Heart left ventricle (tissue), 16 donors: ENCODE measurements at regions of chr1 and their contacts with region 1.

Region 1: DNA sequence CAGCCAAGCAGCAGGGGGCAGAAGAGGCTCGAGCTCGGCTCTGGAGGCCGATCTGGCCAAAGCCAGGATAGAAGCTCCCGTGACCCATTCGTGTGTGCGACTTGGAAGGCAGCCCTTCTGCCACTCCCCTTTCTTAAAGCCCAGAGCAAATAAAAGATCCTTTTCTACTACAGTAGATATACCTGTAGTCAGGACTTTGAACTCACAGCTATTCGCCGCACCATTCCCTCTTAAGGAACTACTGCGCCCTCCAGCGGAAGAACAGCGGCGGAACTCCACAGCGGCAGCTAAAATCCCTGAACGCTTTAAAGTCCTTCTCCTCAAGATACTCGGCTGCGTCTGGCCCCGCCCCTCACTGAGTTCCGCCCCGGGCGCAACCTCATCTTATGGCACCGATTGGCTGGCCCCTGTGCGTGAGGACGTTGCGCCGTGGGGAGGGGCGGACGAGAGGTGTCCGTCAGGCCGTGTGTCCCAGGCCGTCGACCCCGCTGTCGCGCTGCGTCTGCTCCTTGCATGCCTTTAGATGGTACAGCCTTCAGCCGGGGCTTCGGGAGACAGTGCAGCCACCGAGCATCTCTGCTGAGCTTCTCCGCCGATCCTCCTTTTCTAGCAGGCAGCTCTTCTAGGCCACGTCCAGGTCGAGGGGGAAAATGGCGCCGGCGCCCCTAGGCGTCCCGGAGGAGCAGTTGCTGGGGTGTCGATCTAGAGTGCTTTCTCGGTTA is at the start of gene LRIG2:
- DNase-seq: peak; percentile 98 to 99 (median 98)
- ATAC-seq: peak; percentile 99 to 100 (median 100)
- H3K4me3 ChIP-seq: peak within 1 kb of the TSS; percentile 66 to 89 (median 78)
- H3K27ac ChIP-seq: peak within 1 kb of the TSS; percentile 87 to 96 (median 92)
- H3K4me1 ChIP-seq: peaks cover 4 to 40% (median 26%) of the 10 kb centered on the region in 12 donors
- H3K27me3 ChIP-seq: no peaks in the 10 kb centered on the region
- CTCF ChIP-seq: peak; percentile 82 to 96 (median 86)
- POLR2A ChIP-seq: peak; percentile 71 to 85
- total RNA-seq, gene LRIG2: 5.9 to 13.1 (median 8.6) TPM

Region 2: GRCh38 chr1:113677250-113678158 is 604.6 kb after region 1 on chr1:
- intact Hi-C with region 1: loop called in 1 of 10 experiments (anchors 5 kb)
- DNase-seq: peak in 3 of 5 donors; percentile 16 to 39 (median 22)
- ATAC-seq: peak in 3 of 4 donors; percentile 42 to 75 (median 74)
- H3K4me3 ChIP-seq: no peak overlapping the region
- H3K27ac ChIP-seq: no peak overlapping the region
- H3K4me1 ChIP-seq: peaks cover 0 to 11% (median 7%) of the 10 kb centered on the region in 12 donors
- H3K27me3 ChIP-seq: no peaks in the 10 kb centered on the region
- CTCF ChIP-seq: peak; percentile 46 to 73 (median 64)
- POLR2A ChIP-seq: no peak